ENCODE measurements at regions of chr9 and their contacts with region 1.

Region 1: GRCh38 chr9:7055201-7055903 is 297.6 kb downstream of the KDM4C start:
- DNase-seq: no peak
- ATAC-seq: no peak
- H3K4me3 ChIP-seq: no peak overlapping the region
- H3K27ac ChIP-seq: no peak overlapping the region
- H3K4me1 ChIP-seq: peaks cover 14 to 16% of the 10 kb centered on the region in 2 donors
- H3K27me3 ChIP-seq: no peaks in the 10 kb centered on the region
- CTCF ChIP-seq: no peak
- POLR2A ChIP-seq: no peak

Region 2: DNA sequence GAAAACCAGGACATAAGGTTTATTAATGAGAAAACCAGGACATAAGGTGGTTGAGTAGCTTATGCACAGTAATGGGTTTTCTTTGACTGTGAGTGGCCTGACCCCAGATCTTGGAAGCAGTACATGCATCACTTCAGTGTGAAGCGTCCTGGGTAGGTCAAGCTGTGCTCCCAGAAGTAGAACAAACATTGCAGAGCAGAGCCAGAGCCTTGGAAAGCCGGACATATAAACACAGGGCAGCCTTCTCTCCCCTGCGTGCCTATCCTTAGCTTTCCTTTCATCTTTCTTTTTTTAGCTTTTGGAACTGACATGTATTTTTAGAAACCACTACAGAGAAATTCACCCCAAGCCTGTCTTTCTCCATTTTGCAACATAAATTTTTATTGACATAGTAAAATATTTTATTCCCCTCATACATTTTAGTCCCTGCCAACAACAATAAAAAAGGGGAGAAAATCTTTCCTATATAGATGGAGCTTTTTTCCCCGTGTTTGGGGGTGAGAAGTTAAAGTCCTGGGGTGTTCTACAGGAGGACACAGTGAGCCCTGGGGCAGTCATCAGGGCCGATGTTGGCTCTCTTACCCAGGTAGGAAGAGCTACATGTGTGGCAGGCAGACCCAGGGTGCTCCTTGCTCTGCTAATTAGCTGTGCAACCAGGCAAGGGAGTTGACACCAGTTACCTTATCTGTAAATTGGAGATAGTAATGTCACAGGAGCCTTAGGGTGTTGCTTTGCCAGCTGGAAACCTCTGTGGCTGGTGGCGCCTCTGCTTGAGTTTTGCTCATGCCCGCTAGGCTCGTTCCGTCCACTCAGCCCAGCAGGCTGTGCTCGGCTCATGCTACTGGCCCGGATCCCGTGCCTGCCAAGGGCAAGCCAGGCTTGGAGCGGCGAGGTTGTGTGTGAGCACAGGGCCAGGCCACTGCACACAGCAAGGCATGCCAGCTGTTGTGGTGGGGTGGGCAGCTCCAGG is 92.1 kb after region 1 on chr9:
- in situ Hi-C with region 1: no loop called
- intact Hi-C with region 1: loop called (anchors 5 kb)
- DNase-seq: peak; percentile 82 to 90
- ATAC-seq: peak; percentile 90 to 91
- H3K4me3 ChIP-seq: no peak overlapping the region
- H3K27ac ChIP-seq: peak overlapping the region; percentile 83 to 95 (median 90)
- H3K4me1 ChIP-seq: peaks cover 56 to 68% of the 10 kb centered on the region in 2 donors
- H3K27me3 ChIP-seq: no peaks in the 10 kb centered on the region
- CTCF ChIP-seq: peak in 2 of 5 experiments; percentile 28 to 40
- POLR2A ChIP-seq: no peak

Region 3: DNA sequence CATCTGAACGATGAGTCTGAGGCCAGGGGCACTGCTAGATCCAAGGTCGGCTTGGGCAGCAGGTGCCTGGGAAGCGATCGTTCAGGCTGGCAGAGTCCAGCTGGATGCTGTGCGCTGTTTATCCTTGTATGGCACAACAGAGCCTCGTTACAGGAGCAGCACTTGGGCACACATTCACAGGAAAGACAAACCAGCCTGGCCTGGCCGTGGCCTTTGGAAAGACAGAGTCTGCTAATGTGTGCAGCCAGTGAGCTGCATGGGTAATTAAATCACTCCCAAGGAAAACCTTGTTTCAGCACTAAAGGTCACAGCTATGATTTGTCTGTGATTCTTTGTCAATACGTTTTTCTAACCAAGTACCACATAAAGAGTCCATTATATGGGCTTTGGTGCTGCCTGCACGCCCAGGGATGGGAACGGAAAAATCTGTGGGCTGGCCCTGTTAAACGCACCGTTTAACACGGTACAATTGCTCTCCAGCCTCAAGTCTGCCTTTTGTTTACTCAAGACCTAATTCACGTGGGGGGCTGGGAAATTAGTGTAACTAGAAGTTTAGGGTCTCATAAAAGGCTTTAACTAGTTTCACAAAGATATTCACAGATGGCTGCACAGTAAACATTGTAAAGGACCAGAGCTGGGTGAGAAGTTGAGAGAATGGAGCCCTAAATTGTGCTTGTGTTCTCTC is 211.7 kb after region 1 on chr9:
- in situ Hi-C with region 1: no loop called
- intact Hi-C with region 1: loop called (anchors 10 kb)
- DNase-seq: no peak
- ATAC-seq: no peak
- H3K4me3 ChIP-seq: no peak overlapping the region
- H3K27ac ChIP-seq: no peak overlapping the region
- H3K4me1 ChIP-seq: no peaks in the 10 kb centered on the region
- H3K27me3 ChIP-seq: no peaks in the 10 kb centered on the region
- CTCF ChIP-seq: no peak
- POLR2A ChIP-seq: no peak

Measured in gastrocnemius medialis (tissue), 4 donors.